ENCODE measurements at regions of chr20 and their contacts with region 1.

Region 1: DNA sequence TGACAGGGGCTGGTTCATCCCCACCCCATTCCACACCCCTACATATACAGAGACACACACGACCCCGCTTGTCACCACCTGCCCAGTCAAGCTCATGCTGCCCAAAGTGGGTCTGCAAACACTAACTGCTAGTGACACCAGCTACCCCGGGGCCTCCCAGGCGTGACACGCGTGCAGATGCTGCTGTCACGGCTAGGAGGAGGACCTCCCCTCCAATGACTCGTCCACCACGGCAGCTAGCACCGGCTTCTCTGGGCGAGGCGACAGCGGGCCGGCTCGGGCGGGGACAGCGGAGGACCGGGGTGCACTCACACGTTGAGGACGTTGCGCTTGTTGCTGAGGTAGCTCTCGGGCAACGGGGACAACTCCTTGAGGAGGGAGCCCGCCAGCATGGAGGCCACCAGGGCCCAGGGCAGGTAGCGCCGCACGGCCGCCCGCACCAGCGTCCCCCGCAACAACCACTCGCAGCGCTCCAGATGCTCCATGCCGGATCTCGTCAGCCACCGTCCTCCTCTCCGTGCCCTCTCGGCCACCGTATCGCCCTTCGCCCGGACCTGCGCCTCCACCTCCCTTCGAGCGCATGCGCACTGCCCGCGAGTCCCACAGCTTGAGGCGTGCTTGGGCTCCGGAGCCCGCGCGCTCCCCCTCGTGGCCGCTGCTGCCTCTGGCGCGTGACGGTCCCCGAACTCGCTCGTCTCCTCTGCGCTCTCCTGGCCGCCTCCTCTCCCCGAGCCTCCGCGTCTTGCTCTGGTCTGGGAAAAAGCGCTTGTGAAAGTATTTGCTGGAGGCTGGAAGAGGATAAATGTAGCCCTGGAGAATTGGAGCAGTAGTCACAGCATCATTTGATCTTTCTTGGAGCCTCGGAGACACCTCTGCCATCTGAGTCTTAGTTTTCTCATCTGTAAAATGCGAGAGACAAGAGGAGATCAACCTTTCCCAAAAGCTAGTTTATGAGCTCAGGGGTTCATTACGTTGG is at the start of gene FITM2:
- DNase-seq: peak; percentile 100
- ATAC-seq: peak; percentile 94
- H3K4me3 Mint-ChIP-seq: peak within 1 kb of the TSS; percentile 93
- H3K27ac Mint-ChIP-seq: peak within 1 kb of the TSS; percentile 92
- H3K4me1 Mint-ChIP-seq: peaks cover 15% of the 10 kb centered on the region
- H3K27me3 Mint-ChIP-seq: peaks cover 2% of the 10 kb centered on the region
- total RNA-seq, gene FITM2: 4.2 to 4.5 TPM

Region 2: DNA sequence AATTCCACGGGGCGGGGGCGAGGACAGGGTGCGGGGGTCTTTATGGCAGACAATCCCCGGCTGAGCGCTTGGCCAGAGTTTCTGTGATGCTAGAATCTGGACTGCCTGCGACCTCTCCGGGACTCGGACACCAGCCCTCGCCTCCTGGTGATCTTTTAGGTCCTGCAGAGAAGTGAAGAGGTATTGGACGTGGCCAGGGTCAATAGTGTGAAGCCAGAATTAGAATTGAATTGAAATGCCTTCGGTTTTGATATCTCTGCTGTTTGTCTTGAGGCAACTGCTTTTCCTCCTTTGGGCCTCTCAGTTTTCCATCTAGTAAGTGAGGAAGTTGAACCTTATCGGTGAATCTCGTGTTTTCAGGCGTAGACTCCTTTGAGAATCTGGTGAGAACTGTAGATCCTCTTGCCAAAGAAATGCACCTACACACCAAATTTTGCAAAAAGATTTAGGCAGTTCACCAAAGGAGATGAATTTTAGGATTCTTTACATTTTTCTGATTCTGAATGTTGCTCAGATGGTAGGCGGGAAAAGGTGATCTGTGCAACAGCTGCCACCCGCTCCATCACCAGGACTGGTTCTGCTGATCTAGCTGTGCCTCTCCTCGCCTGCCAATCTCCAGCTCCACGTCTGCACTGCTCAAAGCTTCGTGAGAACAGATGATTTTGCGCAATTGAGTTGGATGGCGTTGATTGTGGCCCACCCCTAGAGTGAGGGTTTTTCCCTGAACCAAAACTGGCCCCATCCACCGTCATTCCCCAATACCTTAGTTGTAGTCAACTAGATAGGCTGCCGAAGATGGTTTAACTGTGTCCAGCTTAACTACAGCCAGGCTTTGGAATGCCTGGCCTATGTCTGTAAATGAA is 99.5 kb before region 1 on chr20:
- POLR2A ChIA-PET with region 1: interaction called, 10 read pairs
- DNase-seq: no peak
- ATAC-seq: no peak
- H3K4me3 Mint-ChIP-seq: peak overlapping the region; percentile 96
- H3K27ac Mint-ChIP-seq: peak overlapping the region; percentile 96
- H3K4me1 Mint-ChIP-seq: peaks cover 42% of the 10 kb centered on the region
- H3K27me3 Mint-ChIP-seq: no peaks in the 10 kb centered on the region

Region 3: GRCh38 chr20:44217342-44218092 is 93.4 kb before region 1 on chr20:
- POLR2A ChIA-PET with region 1: interaction called, 34 read pairs
- DNase-seq: peak; percentile 63
- ATAC-seq: peak; percentile 54
- H3K4me3 Mint-ChIP-seq: peak overlapping the region; percentile 68
- H3K27ac Mint-ChIP-seq: peak overlapping the region; percentile 84
- H3K4me1 Mint-ChIP-seq: peaks cover 35% of the 10 kb centered on the region
- H3K27me3 Mint-ChIP-seq: no peaks in the 10 kb centered on the region

Region 4: GRCh38 chr20:44326391-44327159 is 15.6 kb after region 1 on chr20:
- POLR2A ChIA-PET with region 1: no interaction called
- DNase-seq: peak; percentile 41
- ATAC-seq: peak; percentile 45
- H3K4me3 Mint-ChIP-seq: peak overlapping the region; percentile 47
- H3K27ac Mint-ChIP-seq: no peak overlapping the region
- H3K4me1 Mint-ChIP-seq: no peaks in the 10 kb centered on the region
- H3K27me3 Mint-ChIP-seq: peaks cover 4% of the 10 kb centered on the region